Activated B cell treated with CpG ODN at 0.5 μM for 24 hours (primary cell): ENCODE measurements at regions of chr3 and their contacts with region 1.

Region 1: GRCh38 chr3:114152519-114153151 is 26.2 kb downstream of the DRD3 start:
- DNase-seq: peak; percentile 78
- ATAC-seq: peak; percentile 98
- H3K4me3 Mint-ChIP-seq: peak overlapping the region; percentile 68
- H3K27ac Mint-ChIP-seq: peak overlapping the region; percentile 47
- H3K4me1 Mint-ChIP-seq: peaks cover 11% of the 10 kb centered on the region
- H3K27me3 Mint-ChIP-seq: no peaks in the 10 kb centered on the region
- CTCF ChIP-seq: peak; percentile 18

Region 2: GRCh38 chr3:113844622-113845222 is 307.9 kb before region 1 on chr3:
- CTCF ChIA-PET with region 1: interaction called, 3 read pairs
- POLR2A ChIA-PET with region 1: no interaction called
- intact Hi-C with region 1: loop called (anchors 1 kb)
- DNase-seq: no peak
- ATAC-seq: peak; percentile 61
- H3K4me3 Mint-ChIP-seq: no peak overlapping the region
- H3K27ac Mint-ChIP-seq: no peak overlapping the region
- H3K4me1 Mint-ChIP-seq: peaks cover 3% of the 10 kb centered on the region
- H3K27me3 Mint-ChIP-seq: no peaks in the 10 kb centered on the region
- CTCF ChIP-seq: no peak

Region 3: GRCh38 chr3:114231616-114232015 is 79.0 kb after region 1 on chr3:
- CTCF ChIA-PET with region 1: no interaction called
- POLR2A ChIA-PET with region 1: no interaction called
- intact Hi-C with region 1: no loop called
- DNase-seq: no peak
- ATAC-seq: no peak
- H3K4me3 Mint-ChIP-seq: no peak overlapping the region
- H3K27ac Mint-ChIP-seq: no peak overlapping the region
- H3K4me1 Mint-ChIP-seq: peaks cover 29% of the 10 kb centered on the region
- H3K27me3 Mint-ChIP-seq: no peaks in the 10 kb centered on the region
- CTCF ChIP-seq: no peak

Region 4: DNA sequence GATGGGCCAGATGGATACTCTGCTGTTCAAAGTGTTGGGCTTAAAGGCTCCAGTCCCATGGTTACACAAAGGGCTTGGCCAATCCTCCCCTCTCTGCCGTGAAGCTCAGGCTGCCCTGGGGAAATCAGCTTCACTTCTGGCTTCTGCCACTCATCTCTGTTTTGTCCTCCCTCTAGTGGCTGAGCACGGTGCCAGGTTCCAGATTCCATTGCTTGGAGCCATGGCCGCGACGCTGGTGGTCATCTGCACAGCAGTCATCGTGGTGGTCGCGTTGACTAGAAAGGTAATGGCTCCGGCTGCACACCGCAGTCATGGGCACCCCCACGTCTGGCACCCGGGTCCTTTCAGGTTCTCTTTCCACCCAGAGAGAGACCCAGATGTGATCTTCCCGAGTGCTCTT is 146.8 kb after region 1 on chr3:
- CTCF ChIA-PET with region 1: interaction called, 10 read pairs
- POLR2A ChIA-PET with region 1: interaction called, 5 read pairs
- intact Hi-C with region 1: loop called (anchors 1 kb)
- DNase-seq: no peak
- ATAC-seq: peak; percentile 44
- H3K4me3 Mint-ChIP-seq: no peak overlapping the region
- H3K27ac Mint-ChIP-seq: peak overlapping the region; percentile 37
- H3K4me1 Mint-ChIP-seq: peaks cover 28% of the 10 kb centered on the region
- H3K27me3 Mint-ChIP-seq: no peaks in the 10 kb centered on the region
- CTCF ChIP-seq: no peak

Region 5: DNA sequence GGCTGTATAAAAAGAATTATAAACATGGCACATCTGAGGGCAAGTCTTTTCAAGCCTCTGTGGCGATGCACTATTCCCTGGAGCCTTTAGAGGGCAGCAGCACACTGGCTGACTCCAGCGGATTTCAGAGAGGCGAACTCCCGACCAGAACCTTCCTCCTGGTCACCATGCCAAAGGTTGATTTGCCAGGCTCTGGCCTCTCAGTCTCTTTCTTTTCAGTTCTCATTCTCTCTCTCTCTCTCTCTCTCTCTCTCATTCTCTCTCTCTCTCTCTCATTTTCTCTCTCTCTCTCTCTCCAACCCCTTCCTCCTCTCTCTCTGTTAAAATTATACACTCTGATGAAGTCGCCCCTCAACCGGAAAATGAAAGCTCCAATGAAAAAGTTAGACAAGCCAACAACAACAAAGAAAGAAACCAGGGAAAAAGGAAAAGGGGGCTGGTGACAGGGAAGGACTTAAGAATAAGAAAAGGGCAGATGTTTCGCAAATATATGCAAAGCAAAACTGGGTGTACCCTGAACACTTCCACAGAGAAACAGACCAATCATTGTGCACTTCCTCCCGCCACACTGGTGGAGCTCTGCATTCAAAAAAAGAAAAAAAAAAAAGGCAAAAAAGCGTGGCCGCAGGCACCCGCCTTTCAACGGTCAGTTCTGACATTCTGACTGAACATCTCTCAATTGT is 231.4 kb after region 1 on chr3:
- CTCF ChIA-PET with region 1: interaction called, 3 read pairs
- POLR2A ChIA-PET with region 1: interaction called, 3 read pairs
- intact Hi-C with region 1: loop called (anchors 1 kb)
- DNase-seq: peak; percentile 40
- ATAC-seq: peak; percentile 98
- H3K4me3 Mint-ChIP-seq: no peak overlapping the region
- H3K27ac Mint-ChIP-seq: no peak overlapping the region
- H3K4me1 Mint-ChIP-seq: peaks cover 4% of the 10 kb centered on the region
- H3K27me3 Mint-ChIP-seq: no peaks in the 10 kb centered on the region
- CTCF ChIP-seq: peak; percentile 68

Region 6: DNA sequence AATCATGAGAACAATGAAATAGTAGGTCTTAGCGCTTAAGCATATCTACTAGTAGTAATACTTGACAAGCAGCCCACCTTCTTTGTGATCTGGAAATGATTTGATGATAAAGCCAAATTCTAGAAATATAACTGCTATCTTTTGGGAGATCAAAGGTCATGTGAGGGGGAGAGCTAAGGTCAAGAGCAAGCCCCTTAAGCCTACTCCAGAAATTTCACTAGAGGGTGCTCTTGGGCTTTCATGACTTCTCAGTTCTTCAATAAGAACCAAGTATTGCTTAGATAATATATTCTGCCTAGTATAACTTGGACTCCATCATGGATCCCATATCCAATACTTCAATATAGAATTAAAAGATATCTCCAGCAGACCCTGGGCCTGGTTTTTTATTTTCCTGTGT is 674.9 kb after region 1 on chr3:
- CTCF ChIA-PET with region 1: no interaction called
- POLR2A ChIA-PET with region 1: no interaction called
- intact Hi-C with region 1: loop called (anchors 10 kb)
- DNase-seq: no peak
- ATAC-seq: peak; percentile 75
- H3K4me3 Mint-ChIP-seq: no peak overlapping the region
- H3K27ac Mint-ChIP-seq: no peak overlapping the region
- H3K4me1 Mint-ChIP-seq: no peaks in the 10 kb centered on the region
- H3K27me3 Mint-ChIP-seq: no peaks in the 10 kb centered on the region
- CTCF ChIP-seq: no peak

Region 7: DNA sequence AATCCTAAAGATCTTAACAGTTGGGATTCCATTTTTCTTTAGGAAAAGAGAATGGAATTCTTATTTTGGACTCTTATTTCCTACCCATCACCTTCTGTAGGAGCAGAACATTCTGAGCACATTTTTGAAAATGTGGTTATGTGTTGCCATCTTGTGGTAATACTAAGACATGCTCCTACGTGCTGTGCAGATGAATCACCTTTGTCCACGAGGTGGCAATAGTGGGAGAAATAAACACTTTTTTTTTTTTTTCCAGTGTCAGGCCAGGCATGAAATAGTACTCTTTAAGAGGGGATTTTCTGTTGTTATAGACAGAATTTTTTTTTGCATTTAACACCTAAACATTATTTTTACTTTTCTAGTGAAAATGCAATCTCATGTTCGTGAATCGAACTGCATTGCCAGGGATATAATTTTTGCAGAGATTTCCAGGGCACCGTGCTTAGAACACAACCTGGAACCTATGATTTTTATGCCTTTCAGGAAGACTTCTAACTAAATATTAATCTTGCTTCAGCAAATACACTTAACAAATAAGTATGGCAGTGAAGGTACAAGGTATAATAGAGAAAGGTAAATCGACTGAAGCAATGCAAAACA is 1667.2 kb after region 1 on chr3:
- CTCF ChIA-PET with region 1: no interaction called
- POLR2A ChIA-PET with region 1: no interaction called
- intact Hi-C with region 1: loop called (anchors 10 kb)
- DNase-seq: no peak
- ATAC-seq: peak; percentile 90
- H3K4me3 Mint-ChIP-seq: no peak overlapping the region
- H3K27ac Mint-ChIP-seq: no peak overlapping the region
- H3K4me1 Mint-ChIP-seq: no peaks in the 10 kb centered on the region
- H3K27me3 Mint-ChIP-seq: no peaks in the 10 kb centered on the region
- CTCF ChIP-seq: peak; percentile 61